Activated CD4-positive, alpha-beta memory T cell treated with anti-CD3 and anti-CD28 coated beads, Interleukin-2, amount 10 ng/mL, durations not matched to agents 7 days and 5 days (primary cell): ENCODE measurements at regions of chr11 and their contacts with region 1.

Region 1: GRCh38 chr11:57456960-57457642 is 3.2 kb upstream of the RTN4RL2 start:
- DNase-seq: peak; percentile 75
- H3K4me3 Mint-ChIP-seq: peak overlapping the region; percentile 34
- H3K27ac Mint-ChIP-seq: no peak overlapping the region
- H3K4me1 Mint-ChIP-seq: peaks cover 32% of the 10 kb centered on the region
- H3K27me3 Mint-ChIP-seq: peaks cover 42% of the 10 kb centered on the region

Region 2: DNA sequence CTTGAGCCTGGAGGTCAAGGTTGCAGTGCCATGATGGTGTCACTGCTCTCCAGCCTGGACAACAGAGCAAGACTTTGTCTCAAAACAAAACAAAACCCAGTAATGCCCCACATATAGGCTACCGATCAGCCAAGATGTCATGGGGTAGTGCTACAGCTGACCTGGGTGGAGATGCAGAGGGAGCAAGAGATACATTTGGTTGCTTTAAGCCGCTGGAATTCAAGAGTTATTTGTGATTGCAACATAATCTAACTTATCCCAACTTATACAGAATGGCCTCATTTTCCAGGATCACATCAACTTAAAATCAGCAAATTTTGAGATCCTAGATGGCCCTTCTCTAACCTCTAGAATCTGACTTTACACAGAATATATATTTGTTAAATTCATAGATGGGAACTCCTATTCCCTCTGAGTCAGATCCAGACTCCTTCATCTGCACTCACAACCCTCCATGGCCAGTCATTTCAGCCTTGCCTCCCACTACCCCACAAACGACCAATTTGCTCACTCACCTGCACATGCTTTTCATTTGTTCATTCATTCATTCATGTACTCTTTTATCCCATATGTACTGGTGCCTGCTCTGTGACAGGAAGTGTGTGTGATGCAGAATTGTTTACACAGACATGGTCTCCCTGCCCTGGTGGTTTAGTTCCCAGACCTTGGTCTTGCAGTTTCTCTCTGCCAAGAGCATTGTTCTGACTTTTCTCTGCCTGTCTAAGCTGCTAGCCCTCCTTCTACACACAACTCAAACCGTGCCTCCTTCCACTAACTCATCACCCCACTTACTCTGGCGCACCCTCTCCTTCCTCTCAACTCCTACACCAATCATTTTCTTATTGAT is 195.9 kb before region 1 on chr11:
- CTCF ChIA-PET with region 1: no interaction called
- POLR2A ChIA-PET with region 1: no interaction called
- DNase-seq: no peak
- H3K4me3 Mint-ChIP-seq: no peak overlapping the region
- H3K27ac Mint-ChIP-seq: no peak overlapping the region
- H3K4me1 Mint-ChIP-seq: no peaks in the 10 kb centered on the region
- H3K27me3 Mint-ChIP-seq: peaks cover 8% of the 10 kb centered on the region

Region 3: GRCh38 chr11:57426929-57427726 is 30.0 kb before region 1 on chr11 and contains the start of gene SLC43A3:
- CTCF ChIA-PET with region 1: interaction called, 30 read pairs
- POLR2A ChIA-PET with region 1: interaction called, 4 read pairs
- DNase-seq: peak; percentile 76
- H3K4me3 Mint-ChIP-seq: peak within 1 kb of the TSS; percentile 88
- H3K27ac Mint-ChIP-seq: peak within 1 kb of the TSS; percentile 92
- H3K4me1 Mint-ChIP-seq: peaks cover 56% of the 10 kb centered on the region
- H3K27me3 Mint-ChIP-seq: peaks cover 12% of the 10 kb centered on the region
- total RNA-seq, gene SLC43A3: 94.5 to 101 TPM

Region 4: GRCh38 chr11:57444362-57445121 is 12.6 kb before region 1 on chr11:
- CTCF ChIA-PET with region 1: interaction called, 24 read pairs
- POLR2A ChIA-PET with region 1: no interaction called
- DNase-seq: no peak
- H3K4me3 Mint-ChIP-seq: no peak overlapping the region
- H3K27ac Mint-ChIP-seq: no peak overlapping the region
- H3K4me1 Mint-ChIP-seq: no peaks in the 10 kb centered on the region
- H3K27me3 Mint-ChIP-seq: peaks cover 16% of the 10 kb centered on the region

Region 5: GRCh38 chr11:57480409-57481137 is 23.5 kb after region 1 on chr11:
- CTCF ChIA-PET with region 1: interaction called, 32 read pairs
- POLR2A ChIA-PET with region 1: no interaction called
- DNase-seq: peak; percentile 81
- H3K4me3 Mint-ChIP-seq: no peak overlapping the region
- H3K27ac Mint-ChIP-seq: no peak overlapping the region
- H3K4me1 Mint-ChIP-seq: peaks cover 12% of the 10 kb centered on the region
- H3K27me3 Mint-ChIP-seq: peaks cover 55% of the 10 kb centered on the region

Region 6: DNA sequence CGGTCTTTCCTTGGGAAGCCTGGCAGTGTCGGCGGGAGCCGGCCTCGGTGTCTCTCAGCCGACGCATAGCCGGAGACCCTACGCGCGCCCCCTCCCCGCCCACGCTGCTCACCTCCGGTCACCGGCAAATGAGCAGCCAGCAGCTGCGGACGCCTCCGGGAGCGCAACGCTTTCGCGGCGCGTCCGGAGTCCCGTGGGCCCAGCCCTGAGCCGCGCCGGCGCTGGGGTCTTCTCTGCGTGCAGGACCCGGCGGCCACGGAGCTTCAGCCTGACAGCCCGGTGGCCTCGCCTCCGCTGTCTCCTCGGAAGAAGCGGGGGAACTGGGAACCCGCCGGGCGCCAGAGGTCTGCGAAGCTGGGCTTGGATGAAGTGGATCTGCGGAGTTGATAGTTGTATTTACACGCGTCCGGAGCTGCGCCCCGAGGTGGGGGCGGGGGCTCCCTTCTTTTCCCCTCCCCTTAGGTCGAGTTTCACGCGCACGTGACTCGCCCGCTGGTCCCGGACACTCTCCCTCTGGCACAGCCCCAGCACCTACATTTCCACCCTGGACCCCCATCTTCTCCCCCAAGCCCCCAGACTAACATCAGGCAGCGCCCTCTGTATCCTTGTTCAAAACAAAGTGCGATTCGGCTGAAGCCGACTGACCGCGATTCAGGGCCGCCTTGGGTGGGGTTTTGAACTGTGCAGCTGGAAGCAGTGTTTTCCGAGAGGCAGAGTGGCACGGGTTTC is 58.4 kb after region 1 on chr11 and contains the start of gene SLC43A1:
- CTCF ChIA-PET with region 1: interaction called, 36 read pairs
- POLR2A ChIA-PET with region 1: interaction called, 4 read pairs
- DNase-seq: peak; percentile 50
- H3K4me3 Mint-ChIP-seq: peak within 1 kb of the TSS; percentile 98
- H3K27ac Mint-ChIP-seq: peak within 1 kb of the TSS; percentile 74
- H3K4me1 Mint-ChIP-seq: peaks cover 32% of the 10 kb centered on the region
- H3K27me3 Mint-ChIP-seq: no peaks in the 10 kb centered on the region
- total RNA-seq, gene SLC43A1: 29.9 to 31.7 TPM

Region 7: DNA sequence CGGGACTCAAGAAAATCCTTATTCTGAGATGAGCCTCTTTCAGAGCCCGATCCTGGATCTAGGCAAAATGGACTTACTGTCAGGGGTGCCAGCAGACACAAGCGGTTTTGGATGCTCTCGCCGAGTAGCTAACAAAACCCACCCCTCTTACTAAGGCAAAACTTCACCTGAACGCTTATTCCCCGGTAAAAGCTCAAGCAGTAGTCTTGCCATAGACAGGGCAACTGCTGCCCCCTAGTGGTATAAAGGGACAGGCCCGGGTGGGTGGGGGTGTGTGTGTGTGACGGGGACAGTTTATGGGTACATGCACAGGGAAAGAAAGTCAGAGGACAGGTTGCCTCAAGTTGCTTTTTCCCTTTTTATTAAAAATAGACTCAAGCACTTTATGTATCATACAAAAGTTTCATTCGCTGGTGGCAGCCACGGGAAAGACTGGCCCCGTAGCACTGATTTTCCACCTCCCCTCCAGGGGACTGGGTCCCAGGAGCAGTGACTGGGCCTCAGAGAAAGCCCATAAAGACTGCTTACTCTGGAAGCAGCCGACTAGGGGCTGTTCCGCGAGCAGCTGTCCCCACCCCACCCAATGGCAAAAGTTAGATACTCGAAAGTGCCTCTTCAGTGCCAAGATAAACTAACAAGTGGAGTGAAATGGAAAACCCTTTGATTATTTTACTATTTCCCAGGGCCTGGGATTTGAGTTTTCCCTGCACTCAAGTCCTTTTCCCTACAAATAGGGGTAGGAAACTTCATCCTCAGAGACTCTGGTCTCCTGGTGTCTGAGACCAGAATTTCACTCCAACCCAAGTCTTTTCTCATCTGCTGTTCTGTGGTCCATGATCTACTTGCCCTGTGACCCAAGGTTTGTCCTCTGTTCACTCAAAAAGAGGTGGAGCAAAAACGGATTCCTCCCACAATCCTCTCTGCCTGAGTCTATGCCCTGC is 187.9 kb after region 1 on chr11:
- CTCF ChIA-PET with region 1: interaction called, 27 read pairs
- POLR2A ChIA-PET with region 1: no interaction called
- DNase-seq: peak; percentile 85
- H3K4me3 Mint-ChIP-seq: no peak overlapping the region
- H3K27ac Mint-ChIP-seq: no peak overlapping the region
- H3K4me1 Mint-ChIP-seq: peaks cover 31% of the 10 kb centered on the region
- H3K27me3 Mint-ChIP-seq: peaks cover 64% of the 10 kb centered on the region